Esophagus muscularis mucosa (tissue), 4 donors: ENCODE measurements at regions of chr9 and their contacts with region 1.

Region 1: DNA sequence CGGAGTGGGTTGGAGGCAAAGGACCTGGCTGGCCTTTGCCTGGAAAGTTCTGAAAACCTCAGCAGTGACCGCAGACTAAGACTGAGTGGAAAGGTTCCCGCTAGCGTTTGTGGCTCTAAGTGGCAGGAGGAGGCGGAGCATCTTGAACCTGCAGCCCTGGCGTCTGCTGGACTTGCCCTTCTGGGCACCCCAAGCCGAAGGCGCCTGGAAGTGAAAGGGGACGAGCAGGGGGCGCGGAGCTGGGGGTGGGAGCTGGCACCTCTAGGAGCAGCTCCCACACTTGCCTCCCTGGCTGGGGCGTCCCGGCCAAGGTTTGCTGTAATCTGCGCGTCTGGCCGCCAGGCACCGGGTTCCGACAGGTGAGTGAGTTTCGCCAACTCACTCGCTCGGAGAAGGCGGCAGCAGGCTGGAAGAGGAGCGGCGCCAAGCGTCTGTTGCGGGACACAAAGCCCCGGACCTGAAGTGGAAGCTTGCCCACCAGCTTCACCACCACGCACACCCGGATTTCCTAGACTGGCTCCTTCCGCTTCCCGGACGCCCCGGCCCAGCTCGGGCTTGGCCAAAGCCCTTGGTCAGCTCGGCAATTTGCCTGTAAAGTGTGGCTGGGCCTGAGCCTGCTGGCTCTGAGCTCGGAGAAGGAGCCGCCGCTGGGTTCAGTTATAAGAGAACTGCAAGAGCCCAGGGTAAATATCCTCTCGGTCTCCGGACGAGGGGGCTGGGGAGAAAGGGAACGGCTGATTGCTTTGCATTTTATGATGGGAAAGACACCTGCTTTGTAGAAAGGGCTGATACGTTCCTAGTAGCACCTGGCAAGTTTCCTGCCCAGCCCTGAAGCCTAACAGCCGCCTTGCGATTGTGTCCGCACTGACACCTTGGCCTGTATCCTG is at the start of gene GNA14:
- DNase-seq: no peak
- H3K4me3 ChIP-seq: peak within 1 kb of the TSS; percentile 59 to 65 (median 62)
- H3K27ac ChIP-seq: peak within 1 kb of the TSS; percentile 58 to 78 (median 64)
- H3K4me1 ChIP-seq: peaks cover 0 to 35% (median 32%) of the 10 kb centered on the region in 4 donors
- H3K27me3 ChIP-seq: peaks cover 0 to 23% (median 3%) of the 10 kb centered on the region in 4 donors
- CTCF ChIP-seq: no peak
- EP300 ChIP-seq: no peak
- POLR2A ChIP-seq: no peak
- total RNA-seq, gene GNA14: 4.7 to 9.4 (median 7.4) TPM

Region 2: GRCh38 chr9:77456829-77457437 is 191.5 kb before region 1 on chr9:
- intact Hi-C with region 1: loop called (anchors 5 kb)
- DNase-seq: peak; percentile 94
- H3K4me3 ChIP-seq: no peak overlapping the region
- H3K27ac ChIP-seq: no peak overlapping the region
- H3K4me1 ChIP-seq: peaks cover 0 to 21% (median 9%) of the 10 kb centered on the region in 4 donors
- H3K27me3 ChIP-seq: no peaks in the 10 kb centered on the region
- CTCF ChIP-seq: peak; percentile 87 to 95 (median 88)
- EP300 ChIP-seq: no peak
- POLR2A ChIP-seq: no peak

Region 3: GRCh38 chr9:77544546-77544945 is 103.9 kb before region 1 on chr9:
- intact Hi-C with region 1: no loop called
- DNase-seq: no peak
- H3K4me3 ChIP-seq: no peak overlapping the region
- H3K27ac ChIP-seq: no peak overlapping the region
- H3K4me1 ChIP-seq: no peaks in the 10 kb centered on the region
- H3K27me3 ChIP-seq: no peaks in the 10 kb centered on the region
- CTCF ChIP-seq: no peak
- EP300 ChIP-seq: no peak
- POLR2A ChIP-seq: no peak

Region 4: DNA sequence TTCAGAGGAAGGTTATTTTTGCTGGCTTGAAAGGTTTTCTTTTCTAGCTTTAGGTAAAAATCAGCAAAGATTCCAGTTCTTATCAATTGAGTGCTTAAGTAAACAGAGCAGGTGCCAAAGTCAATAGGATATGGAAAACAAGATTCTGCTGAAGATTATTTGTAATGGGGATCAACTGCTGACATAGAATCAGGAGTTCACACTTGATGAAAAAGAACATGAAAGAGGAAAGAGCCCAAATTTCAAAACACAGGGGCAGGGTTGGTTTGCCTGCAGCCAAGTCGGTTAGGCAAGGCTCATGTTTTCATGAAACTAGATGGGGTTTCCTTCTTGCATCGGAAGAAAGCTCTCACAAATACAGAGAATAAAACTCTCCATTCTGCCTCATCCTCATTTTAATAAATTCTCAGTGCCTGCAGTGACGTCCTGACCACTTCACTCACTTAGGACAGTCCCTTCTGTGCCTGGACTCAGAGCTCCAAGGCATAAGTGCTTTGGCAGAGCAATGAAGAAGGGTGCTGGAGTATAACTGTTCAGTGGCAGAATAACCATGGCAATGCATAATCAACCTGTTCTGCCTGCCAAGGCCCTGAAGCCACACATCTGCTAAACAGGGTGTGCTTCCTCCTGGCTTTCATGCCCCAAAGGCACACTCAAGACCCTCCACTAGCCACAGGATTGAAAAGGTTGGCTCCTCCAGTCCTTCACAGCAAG is 203.6 kb after region 1 on chr9:
- intact Hi-C with region 1: loop called (anchors 10 kb)
- DNase-seq: no peak
- H3K4me3 ChIP-seq: no peak overlapping the region
- H3K27ac ChIP-seq: peak overlapping the region; percentile 13 to 62 (median 30)
- H3K4me1 ChIP-seq: peaks cover 31 to 73% (median 64%) of the 10 kb centered on the region in 4 donors
- H3K27me3 ChIP-seq: no peaks in the 10 kb centered on the region
- CTCF ChIP-seq: no peak
- EP300 ChIP-seq: no peak
- POLR2A ChIP-seq: no peak